ENCODE measurements at regions of chr15 and their contacts with region 1.

Region 1: GRCh38 chr15:72796515-72797337 is 13.2 kb upstream of the ADPGK start:
- DNase-seq: peak; percentile 76 to 82
- ATAC-seq: peak; percentile 90 to 97
- H3K4me3 ChIP-seq: peak overlapping the region; percentile 73
- H3K27ac ChIP-seq: peak overlapping the region; percentile 80 to 87
- H3K4me1 ChIP-seq: peaks cover 12% of the 10 kb centered on the region; the same call in 1 of the 3 replicates
- CTCF ChIP-seq: peak; percentile 98
- EP300 ChIP-seq: no peak
- POLR2A ChIP-seq: no peak; the same call in 1 of the 2 replicates
- RAD21 ChIP-seq: peak; percentile 61 to 98

Region 2: GRCh38 chr15:73081321-73081958 is 284.7 kb after region 1 on chr15:
- CTCF ChIA-PET with region 1: interaction called, 53 read pairs
- POLR2A ChIA-PET with region 1: interaction called, 3 read pairs
- DNase-seq: peak; percentile 28 to 73
- ATAC-seq: peak; percentile 85 to 87; a peak in 5 of 6 replicates
- H3K4me3 ChIP-seq: no peak overlapping the region
- H3K27ac ChIP-seq: no peak overlapping the region
- H3K4me1 ChIP-seq: peaks cover 10% of the 10 kb centered on the region
- CTCF ChIP-seq: peak; percentile 92
- EP300 ChIP-seq: no peak
- POLR2A ChIP-seq: no peak
- RAD21 ChIP-seq: peak; percentile 91 to 93